Ovary (tissue), 10 donors: ENCODE measurements at regions of chrX and their contacts with region 1.

Region 1: GRCh38 chrX:154980330-154981096 is 42.0 kb downstream of the F8 start:
- DNase-seq: peak; percentile 49 to 80 (median 71)
- H3K4me3 ChIP-seq: no peak overlapping the region
- H3K27ac ChIP-seq: no peak overlapping the region
- H3K4me1 ChIP-seq: no peaks in the 10 kb centered on the region
- H3K27me3 ChIP-seq: no peaks in the 10 kb centered on the region
- CTCF ChIP-seq: peak; percentile 45 to 69 (median 58)
- EP300 ChIP-seq: no peak
- POLR2A ChIP-seq: no peak

Region 2: DNA sequence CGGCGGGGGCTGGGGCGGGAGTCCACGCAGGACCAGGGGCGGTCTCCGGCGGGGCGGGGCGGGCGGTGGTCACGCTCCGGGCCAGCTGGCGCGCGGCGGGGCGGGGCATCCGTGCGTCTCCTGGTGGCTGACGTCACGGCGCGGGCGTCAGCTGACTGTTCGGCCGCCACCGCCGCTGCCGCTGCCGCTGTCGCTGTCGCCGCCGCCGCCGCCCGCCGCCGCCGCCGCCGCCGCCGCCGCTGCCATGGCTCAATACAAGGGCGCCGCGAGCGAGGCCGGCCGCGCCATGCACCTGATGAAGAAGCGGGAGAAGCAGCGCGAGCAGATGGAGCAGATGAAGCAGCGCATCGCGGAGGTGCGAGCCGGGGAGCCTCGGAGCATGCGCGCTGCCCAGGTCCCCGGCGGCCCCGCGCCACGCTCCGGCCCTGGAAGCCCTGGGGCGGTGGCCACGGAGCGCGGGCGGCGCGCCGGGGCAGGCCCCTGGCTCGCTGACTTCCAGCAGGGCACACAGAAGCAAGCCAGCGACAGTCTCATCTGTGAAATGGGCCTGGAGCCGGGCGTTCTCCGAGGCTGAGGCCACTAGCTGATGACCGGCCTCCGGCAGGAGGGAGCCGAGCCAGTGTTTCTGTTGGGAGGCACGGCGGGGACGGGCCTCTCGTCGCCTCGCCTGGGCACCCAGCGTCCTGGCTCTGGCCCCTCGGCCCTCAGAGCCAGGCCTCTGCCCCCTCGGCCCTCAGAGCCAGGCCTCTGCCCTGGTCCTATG is 536.3 kb before region 1 on chrX and contains the start of gene FAM50A:
- intact Hi-C with region 1: no loop called
- DNase-seq: peak; percentile 75 to 85 (median 80)
- H3K4me3 ChIP-seq: peak within 1 kb of the TSS; percentile 47
- H3K27ac ChIP-seq: peak within 1 kb of the TSS; percentile 60 to 64
- H3K4me1 ChIP-seq: no peaks in the 10 kb centered on the region
- H3K27me3 ChIP-seq: no peaks in the 10 kb centered on the region
- CTCF ChIP-seq: peak in 1 of 3 donors; percentile 27
- EP300 ChIP-seq: no peak
- POLR2A ChIP-seq: peak; percentile 50
- total RNA-seq, gene FAM50A: 21.3 to 48.9 (median 34.3) TPM

Region 3: GRCh38 chrX:155056877-155057792 is 76.6 kb after region 1 on chrX:
- intact Hi-C with region 1: loop called in 2 of 4 experiments (anchors 5 kb)
- DNase-seq: peak; percentile 42 to 75 (median 70)
- H3K4me3 ChIP-seq: no peak overlapping the region
- H3K27ac ChIP-seq: no peak overlapping the region
- H3K4me1 ChIP-seq: no peaks in the 10 kb centered on the region
- H3K27me3 ChIP-seq: no peaks in the 10 kb centered on the region
- CTCF ChIP-seq: peak; percentile 47 to 63 (median 60)
- EP300 ChIP-seq: no peak
- POLR2A ChIP-seq: no peak